ENCODE measurements at regions of chr9 and their contacts with region 1.

Region 1: GRCh38 chr9:129737479-129738274 is 15.2 kb downstream of the PTGES start:
- DNase-seq: peak; percentile 83
- H3K4me3 Mint-ChIP-seq: peak overlapping the region; percentile 58
- H3K27ac Mint-ChIP-seq: no peak overlapping the region
- H3K4me1 Mint-ChIP-seq: no peaks in the 10 kb centered on the region
- H3K27me3 Mint-ChIP-seq: peaks cover 4% of the 10 kb centered on the region
- CTCF ChIP-seq: peak; percentile 90

Region 2: DNA sequence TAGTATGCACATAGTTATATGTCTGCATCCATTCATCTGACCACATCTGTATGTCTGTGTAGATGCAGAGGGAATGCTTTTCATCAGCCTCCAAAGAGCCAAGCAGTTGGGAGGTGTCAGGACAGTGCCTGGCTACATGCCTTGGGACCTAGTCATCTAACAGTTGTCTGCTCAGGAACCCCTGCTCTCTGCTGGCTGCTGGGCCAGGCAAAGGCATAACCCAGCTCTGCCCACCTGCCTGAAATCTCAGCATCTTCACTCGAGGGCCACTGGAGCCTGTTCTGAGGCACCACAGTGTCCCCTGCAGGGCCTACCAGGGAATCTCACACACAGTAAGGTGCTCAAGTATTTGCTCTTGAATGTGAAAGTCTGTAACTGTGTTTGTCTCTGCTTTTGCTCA is 120.5 kb before region 1 on chr9:
- CTCF ChIA-PET with region 1: no interaction called
- intact Hi-C with region 1: no loop called
- DNase-seq: peak; percentile 44
- H3K4me3 Mint-ChIP-seq: no peak overlapping the region
- H3K27ac Mint-ChIP-seq: no peak overlapping the region
- H3K4me1 Mint-ChIP-seq: no peaks in the 10 kb centered on the region
- H3K27me3 Mint-ChIP-seq: no peaks in the 10 kb centered on the region
- CTCF ChIP-seq: no peak

Region 3: DNA sequence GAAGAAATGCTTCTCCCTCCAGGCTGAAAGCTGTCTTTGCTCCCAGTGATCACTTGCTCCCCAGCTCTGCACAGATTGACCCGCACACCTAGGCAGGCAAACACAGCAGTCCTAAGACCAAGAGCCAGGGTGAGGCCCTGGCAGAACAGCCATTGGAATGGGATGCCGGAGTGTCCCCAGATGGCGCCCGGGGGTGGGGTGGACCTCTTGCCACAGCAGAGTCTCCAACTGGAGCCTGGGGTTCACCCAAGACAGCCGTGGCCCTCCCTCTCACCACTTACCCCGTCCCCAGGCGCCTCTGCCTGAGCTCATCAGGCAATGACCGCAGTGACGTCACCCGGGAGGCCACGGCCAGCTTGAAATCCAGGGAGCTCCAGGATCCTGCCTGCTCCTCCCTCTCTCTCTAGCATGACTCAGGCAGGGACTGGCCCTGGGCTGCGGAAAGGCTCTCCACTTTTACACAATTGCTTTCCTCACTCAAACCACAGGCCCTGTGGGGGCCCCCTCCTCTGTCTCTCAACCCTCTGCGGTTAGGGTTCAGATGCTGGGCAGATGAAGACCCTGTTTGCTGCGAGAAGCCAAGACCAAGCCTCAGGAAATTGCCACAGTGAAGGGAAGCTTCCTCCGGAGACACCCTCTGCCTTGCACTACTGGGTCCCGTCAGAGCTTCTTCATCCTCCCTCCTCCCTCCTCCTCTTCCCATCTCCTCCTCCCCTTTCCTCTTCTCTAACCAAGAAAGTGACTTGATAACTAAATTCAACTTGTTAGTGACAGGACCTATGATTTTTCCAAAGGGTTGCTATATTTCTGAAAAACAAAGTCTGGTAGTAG is 39.5 kb after region 1 on chr9:
- CTCF ChIA-PET with region 1: interaction called, 11 read pairs
- intact Hi-C with region 1: loop called (anchors 2 kb)
- DNase-seq: peak; percentile 87
- H3K4me3 Mint-ChIP-seq: peak overlapping the region; percentile 22
- H3K27ac Mint-ChIP-seq: peak overlapping the region; percentile 82
- H3K4me1 Mint-ChIP-seq: peaks cover 26% of the 10 kb centered on the region
- H3K27me3 Mint-ChIP-seq: no peaks in the 10 kb centered on the region
- CTCF ChIP-seq: no peak

Region 4: GRCh38 chr9:129783516-129784361 is 46.1 kb after region 1 on chr9:
- CTCF ChIA-PET with region 1: interaction called, 5 read pairs
- intact Hi-C with region 1: loop called (anchors 2 kb)
- DNase-seq: peak; percentile 71
- H3K4me3 Mint-ChIP-seq: no peak overlapping the region
- H3K27ac Mint-ChIP-seq: no peak overlapping the region
- H3K4me1 Mint-ChIP-seq: no peaks in the 10 kb centered on the region
- H3K27me3 Mint-ChIP-seq: peaks cover 40% of the 10 kb centered on the region
- CTCF ChIP-seq: peak; percentile 66